Naive thymus-derived CD4-positive, alpha-beta T cell (primary cell): ENCODE measurements at regions of chr1 and their contacts with region 1.

Region 1: GRCh38 chr1:85276215-85276977 is at the start of gene BCL10:
- DNase-seq: peak; percentile 95 to 98 (median 97)
- ATAC-seq: peak; percentile 97
- H3K4me3 ChIP-seq: peak within 1 kb of the TSS; percentile 89
- H3K4me3 Mint-ChIP-seq: peak within 1 kb of the TSS; percentile 82 to 95 (median 90)
- H3K27ac ChIP-seq: peak within 1 kb of the TSS; percentile 97
- H3K27ac Mint-ChIP-seq: peak within 1 kb of the TSS; percentile 84 to 97 (median 95)
- H3K4me1 ChIP-seq: peaks cover 17 to 28% of the 10 kb centered on the region in 2 donors
- H3K4me1 Mint-ChIP-seq: peaks cover 36 to 55% (median 47%) of the 10 kb centered on the region in 7 donors
- H3K27me3 ChIP-seq: no peaks in the 10 kb centered on the region
- H3K27me3 Mint-ChIP-seq: peaks cover 0 to 21% (median 0%) of the 10 kb centered on the region in 5 donors
- total RNA-seq, gene BCL10: 30.4 to 53.0 (median 35.4) TPM

Region 2: DNA sequence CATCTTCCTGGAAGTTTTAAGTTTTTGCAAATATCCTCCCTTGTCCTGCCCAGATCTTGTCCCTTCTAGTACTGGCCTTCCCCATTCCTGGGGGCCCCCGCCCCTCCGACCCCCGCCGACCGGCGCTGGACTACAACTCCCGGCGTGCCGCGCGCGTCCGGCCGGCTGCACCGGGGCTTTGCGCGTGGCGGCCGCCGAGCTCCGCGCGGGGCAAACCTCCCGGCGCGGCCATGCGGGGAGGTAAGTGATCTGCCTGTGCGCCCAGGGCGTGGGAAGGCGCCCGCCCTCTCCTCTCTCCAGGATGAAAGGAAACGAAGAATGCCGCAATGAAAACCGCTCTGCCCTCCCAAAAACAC is 978.1 kb before region 1 on chr1:
- CTCF ChIA-PET with region 1: no interaction called
- POLR2A ChIA-PET with region 1: no interaction called
- intact Hi-C with region 1: loop called in 1 of 2 experiments (anchors 5 kb)
- DNase-seq: peak; percentile 40 to 65 (median 46)
- ATAC-seq: peak; percentile 88
- H3K4me3 ChIP-seq: peak overlapping the region; percentile 92
- H3K4me3 Mint-ChIP-seq: peak overlapping the region; percentile 83 to 95 (median 90)
- H3K27ac ChIP-seq: peak overlapping the region; percentile 69
- H3K27ac Mint-ChIP-seq: peak overlapping the region; percentile 67 to 85 (median 79)
- H3K4me1 ChIP-seq: peaks cover 4 to 25% of the 10 kb centered on the region in 2 donors
- H3K4me1 Mint-ChIP-seq: peaks cover 17 to 52% (median 42%) of the 10 kb centered on the region in 7 donors
- H3K27me3 ChIP-seq: no peaks in the 10 kb centered on the region
- H3K27me3 Mint-ChIP-seq: peaks cover 0 to 16% (median 6%) of the 10 kb centered on the region in 5 donors

Region 3: DNA sequence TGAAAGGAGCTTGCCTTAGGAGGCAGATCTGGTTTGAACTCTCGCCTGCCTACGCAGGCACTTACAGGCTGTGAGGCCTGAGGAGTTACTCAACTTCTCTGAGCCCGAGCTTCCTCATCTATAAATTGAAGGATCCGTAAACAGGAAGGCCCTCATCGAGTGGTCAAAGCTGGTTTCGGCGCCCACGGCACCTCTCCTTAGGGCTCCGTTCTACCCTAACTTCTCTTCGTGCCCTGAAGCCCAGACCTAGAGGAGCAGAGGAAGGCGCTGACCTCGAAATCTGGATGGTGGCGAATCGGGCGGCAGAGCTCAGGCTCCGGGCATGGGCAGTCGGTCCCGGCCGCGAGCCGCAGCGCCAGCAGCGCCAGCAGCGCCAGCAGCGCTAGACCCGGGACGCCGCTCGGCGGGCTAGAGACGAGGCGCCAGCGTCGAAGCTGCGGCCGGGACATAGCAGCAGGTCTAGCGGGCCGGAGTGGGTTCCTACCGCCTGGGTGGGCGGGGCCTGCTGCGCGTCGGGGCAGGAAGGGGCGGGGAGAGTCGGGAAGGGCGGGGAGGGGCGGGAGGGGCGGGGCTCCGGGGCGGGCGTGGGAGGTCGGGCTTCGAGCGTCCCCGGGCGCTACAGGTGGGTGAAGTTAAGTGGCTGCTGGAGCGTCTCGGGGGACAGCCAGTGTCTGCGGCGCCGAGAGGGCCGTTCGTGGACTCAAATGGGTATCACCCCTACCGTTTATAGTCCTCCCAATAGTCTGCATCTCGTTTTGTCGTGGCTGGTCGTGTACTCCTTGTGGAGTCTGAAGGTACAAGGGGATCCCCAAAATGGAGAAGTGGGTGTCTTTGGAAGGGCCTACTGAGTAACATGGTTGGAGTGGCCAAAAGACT is 702.2 kb before region 1 on chr1 and contains the start of gene CTBS:
- CTCF ChIA-PET with region 1: no interaction called
- POLR2A ChIA-PET with region 1: no interaction called
- intact Hi-C with region 1: loop called (anchors 1 to 5 kb)
- DNase-seq: peak; percentile 69 to 84 (median 82)
- ATAC-seq: peak; percentile 96
- H3K4me3 ChIP-seq: peak within 1 kb of the TSS; percentile 77
- H3K4me3 Mint-ChIP-seq: peak within 1 kb of the TSS; percentile 97 to 99 (median 99)
- H3K27ac ChIP-seq: peak within 1 kb of the TSS; percentile 99
- H3K27ac Mint-ChIP-seq: peak within 1 kb of the TSS; percentile 98 to 100 (median 100)
- H3K4me1 ChIP-seq: peaks cover 9 to 13% of the 10 kb centered on the region in 2 donors
- H3K4me1 Mint-ChIP-seq: peaks cover 29 to 51% (median 40%) of the 10 kb centered on the region in 7 donors
- H3K27me3 ChIP-seq: no peaks in the 10 kb centered on the region
- H3K27me3 Mint-ChIP-seq: peaks cover 0 to 2% (median 0%) of the 10 kb centered on the region in 5 donors
- total RNA-seq, gene CTBS: 17.4 to 22.3 (median 19.0) TPM

Region 4: GRCh38 chr1:84996846-84997666 is 279.3 kb before region 1 on chr1 and contains the start of gene MCOLN2:
- CTCF ChIA-PET with region 1: no interaction called
- POLR2A ChIA-PET with region 1: no interaction called
- intact Hi-C with region 1: loop called (anchors 2 to 5 kb)
- DNase-seq: peak; percentile 7 to 69 (median 37)
- ATAC-seq: peak; percentile 89
- H3K4me3 ChIP-seq: peak within 1 kb of the TSS; percentile 77
- H3K4me3 Mint-ChIP-seq: peak within 1 kb of the TSS; percentile 80 to 95 (median 86)
- H3K27ac ChIP-seq: no peak within 1 kb of the TSS
- H3K27ac Mint-ChIP-seq: peak within 1 kb of the TSS in 4 of 9 donors; percentile 33 to 85 (median 66)
- H3K4me1 ChIP-seq: peaks cover 17 to 26% of the 10 kb centered on the region in 2 donors
- H3K4me1 Mint-ChIP-seq: peaks cover 13 to 57% (median 16%) of the 10 kb centered on the region in 7 donors
- H3K27me3 ChIP-seq: peaks cover 0 to 13% of the 10 kb centered on the region in 2 donors
- H3K27me3 Mint-ChIP-seq: peaks cover 28 to 55% (median 35%) of the 10 kb centered on the region in 5 donors
- total RNA-seq, gene MCOLN2: 2.5 to 35.7 (median 3.1) TPM

Region 5: GRCh38 chr1:85230305-85230980 is 46.0 kb before region 1 on chr1:
- CTCF ChIA-PET with region 1: no interaction called
- POLR2A ChIA-PET with region 1: no interaction called
- intact Hi-C with region 1: no loop called
- DNase-seq: peak in 2 of 9 donors; percentile 11 to 19
- ATAC-seq: peak; percentile 54
- H3K4me3 ChIP-seq: no peak overlapping the region
- H3K4me3 Mint-ChIP-seq: no peak overlapping the region
- H3K27ac ChIP-seq: no peak overlapping the region
- H3K27ac Mint-ChIP-seq: no peak overlapping the region
- H3K4me1 ChIP-seq: no peaks in the 10 kb centered on the region
- H3K4me1 Mint-ChIP-seq: peaks cover 0 to 4% (median 0%) of the 10 kb centered on the region in 7 donors
- H3K27me3 ChIP-seq: no peaks in the 10 kb centered on the region
- H3K27me3 Mint-ChIP-seq: peaks cover 0 to 22% (median 0%) of the 10 kb centered on the region in 5 donors

Region 6: GRCh38 chr1:85297855-85298629 is 21.6 kb after region 1 on chr1:
- CTCF ChIA-PET with region 1: no interaction called
- POLR2A ChIA-PET with region 1: no interaction called
- intact Hi-C with region 1: loop called in 1 of 2 experiments (anchors 1 kb)
- DNase-seq: peak in 1 of 9 donors; percentile 76
- ATAC-seq: peak; percentile 89
- H3K4me3 ChIP-seq: no peak overlapping the region
- H3K4me3 Mint-ChIP-seq: peak overlapping the region in 3 of 10 donors; percentile 16 to 47 (median 28)
- H3K27ac ChIP-seq: no peak overlapping the region
- H3K27ac Mint-ChIP-seq: peak overlapping the region in 4 of 9 donors; percentile 1 to 61 (median 55)
- H3K4me1 ChIP-seq: peaks cover 0 to 19% of the 10 kb centered on the region in 2 donors
- H3K4me1 Mint-ChIP-seq: peaks cover 4 to 17% (median 9%) of the 10 kb centered on the region in 7 donors
- H3K27me3 ChIP-seq: no peaks in the 10 kb centered on the region
- H3K27me3 Mint-ChIP-seq: peaks cover 0 to 41% (median 0%) of the 10 kb centered on the region in 5 donors

Region 7: DNA sequence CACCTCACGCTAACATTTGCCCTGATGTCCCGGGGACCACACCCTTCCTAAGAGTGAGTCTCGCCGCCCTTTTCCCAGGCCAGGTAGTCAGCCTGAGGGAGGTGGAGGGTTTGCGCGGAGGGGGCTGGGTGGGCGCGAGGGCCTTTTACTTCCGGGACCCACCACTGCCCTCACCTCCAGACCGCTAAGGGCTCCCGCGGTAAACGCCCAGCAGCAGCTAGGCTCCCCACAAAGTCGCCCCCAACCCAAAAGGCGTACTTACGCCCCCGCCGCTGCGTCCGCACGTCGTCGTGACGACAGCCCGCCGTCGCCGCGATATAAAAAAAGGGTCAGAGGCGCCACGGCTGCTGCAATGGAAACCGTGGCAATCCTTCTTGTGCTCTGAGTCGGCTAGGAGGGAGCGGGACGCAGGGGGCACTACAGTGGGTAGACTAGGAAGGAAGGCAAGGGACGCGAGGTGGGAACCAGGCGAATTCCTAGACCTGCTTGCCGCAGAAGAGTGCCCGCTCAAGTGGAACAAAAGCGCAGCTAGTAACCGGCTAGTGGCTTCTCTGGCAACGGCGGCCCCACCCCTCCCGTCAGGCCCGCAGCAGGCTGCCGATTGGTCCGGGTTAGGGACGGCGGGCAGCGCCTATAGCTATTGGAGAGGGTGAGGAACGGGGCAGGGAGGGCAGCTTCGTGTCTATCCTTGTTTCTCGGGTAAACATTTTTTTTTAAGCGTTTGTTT is 1119.5 kb after region 1 on chr1 and contains the start of gene ODF2L:
- CTCF ChIA-PET with region 1: no interaction called
- POLR2A ChIA-PET with region 1: no interaction called
- intact Hi-C with region 1: loop called (anchors 5 kb)
- DNase-seq: peak; percentile 73 to 92 (median 90)
- ATAC-seq: peak; percentile 100
- H3K4me3 ChIP-seq: peak within 1 kb of the TSS; percentile 80
- H3K4me3 Mint-ChIP-seq: peak within 1 kb of the TSS; percentile 90 to 100 (median 98)
- H3K27ac ChIP-seq: peak within 1 kb of the TSS; percentile 90
- H3K27ac Mint-ChIP-seq: peak within 1 kb of the TSS; percentile 94 to 99 (median 98)
- H3K4me1 ChIP-seq: peaks cover 17 to 20% of the 10 kb centered on the region in 2 donors
- H3K4me1 Mint-ChIP-seq: peaks cover 23 to 70% (median 58%) of the 10 kb centered on the region in 7 donors
- H3K27me3 ChIP-seq: no peaks in the 10 kb centered on the region
- H3K27me3 Mint-ChIP-seq: peaks cover 0 to 7% (median 0%) of the 10 kb centered on the region in 5 donors
- total RNA-seq, gene ODF2L: 50.3 to 75.3 (median 52.2) TPM